Left ventricle myocardium inferior (tissue), 1 donor: ENCODE measurements at regions of chr2 and their contacts with region 1.

Region 1: GRCh38 chr2:158903711-158904443 is 64.6 kb upstream of the TANC1 start:
- DNase-seq: no peak
- H3K4me3 ChIP-seq: no peak overlapping the region
- H3K27ac ChIP-seq: no peak overlapping the region
- H3K4me1 ChIP-seq: peaks cover 4% of the 10 kb centered on the region
- H3K27me3 ChIP-seq: no peaks in the 10 kb centered on the region
- CTCF ChIP-seq: no peak

Region 2: GRCh38 chr2:158619496-158619895 is 284.4 kb before region 1 on chr2:
- intact Hi-C with region 1: no loop called
- DNase-seq: no peak
- H3K4me3 ChIP-seq: no peak overlapping the region
- H3K27ac ChIP-seq: no peak overlapping the region
- H3K4me1 ChIP-seq: no peaks in the 10 kb centered on the region
- H3K27me3 ChIP-seq: no peaks in the 10 kb centered on the region
- CTCF ChIP-seq: no peak

Region 3: GRCh38 chr2:158953926-158954763 is 50.3 kb after region 1 on chr2:
- intact Hi-C with region 1: loop called (anchors 10 kb)
- DNase-seq: peak; percentile 82
- H3K4me3 ChIP-seq: no peak overlapping the region
- H3K27ac ChIP-seq: peak overlapping the region; percentile 71
- H3K4me1 ChIP-seq: peaks cover 32% of the 10 kb centered on the region
- H3K27me3 ChIP-seq: no peaks in the 10 kb centered on the region
- CTCF ChIP-seq: no peak